ENCODE measurements at regions of chr19 and their contacts with region 1.

Region 1: GRCh38 chr19:10388957-10389356 is 8.6 kb upstream of the TYK2 start:
- DNase-seq: peak; percentile 87
- H3K4me3 Mint-ChIP-seq: no peak overlapping the region
- H3K27ac Mint-ChIP-seq: peak overlapping the region; percentile 12
- H3K4me1 Mint-ChIP-seq: no peaks in the 10 kb centered on the region
- H3K27me3 Mint-ChIP-seq: peaks cover 9% of the 10 kb centered on the region

Region 2: GRCh38 chr19:10259162-10259905 is 129.6 kb before region 1 on chr19:
- CTCF ChIA-PET with region 1: interaction called, 140 read pairs
- DNase-seq: peak; percentile 96
- H3K4me3 Mint-ChIP-seq: no peak overlapping the region
- H3K27ac Mint-ChIP-seq: peak overlapping the region; percentile 72
- H3K4me1 Mint-ChIP-seq: peaks cover 14% of the 10 kb centered on the region
- H3K27me3 Mint-ChIP-seq: no peaks in the 10 kb centered on the region

Region 3: GRCh38 chr19:10416380-10417257 is 27.7 kb after region 1 on chr19:
- CTCF ChIA-PET with region 1: interaction called, 13 read pairs
- DNase-seq: peak; percentile 97
- H3K4me3 Mint-ChIP-seq: peak overlapping the region; percentile 61
- H3K27ac Mint-ChIP-seq: peak overlapping the region; percentile 90
- H3K4me1 Mint-ChIP-seq: peaks cover 73% of the 10 kb centered on the region
- H3K27me3 Mint-ChIP-seq: peaks cover 56% of the 10 kb centered on the region